Left ventricle myocardium superior (tissue), 1 donor: ENCODE measurements at regions of chr7 and their contacts with region 1.

Region 1: DNA sequence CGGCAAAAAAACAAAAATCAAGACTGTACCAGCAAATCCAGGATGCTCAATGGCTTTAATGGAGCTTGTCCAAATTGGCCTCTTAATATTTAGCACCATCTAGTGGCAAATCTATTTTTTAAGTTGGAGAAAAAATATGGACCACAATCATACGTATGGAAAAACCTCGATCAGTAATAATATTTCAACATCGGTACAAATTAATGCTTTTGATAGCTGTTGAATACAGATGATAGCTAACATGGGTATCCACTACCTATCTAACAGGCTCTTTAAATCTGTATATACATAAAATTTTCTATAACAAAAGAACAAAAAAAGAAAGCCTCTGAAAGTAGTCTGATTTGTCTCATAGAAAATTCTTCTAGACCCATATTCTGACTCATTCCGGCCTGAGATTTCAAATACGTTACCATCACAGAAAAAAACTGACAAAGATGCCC is 29.2 kb downstream of the COA1 start:
- DNase-seq: no peak
- ATAC-seq: peak; percentile 63

Region 2: GRCh38 chr7:43582503-43583423 is 117.3 kb before region 1 on chr7 and contains the start of gene STK17A:
- intact Hi-C with region 1: loop called (anchors 5 kb)
- DNase-seq: peak; percentile 94
- ATAC-seq: peak; percentile 96
- total RNA-seq, gene STK17A: 26.5 TPM